CD4-positive, alpha-beta memory T cell (primary cell): ENCODE measurements at regions of chr10 and their contacts with region 1.

Region 1: DNA sequence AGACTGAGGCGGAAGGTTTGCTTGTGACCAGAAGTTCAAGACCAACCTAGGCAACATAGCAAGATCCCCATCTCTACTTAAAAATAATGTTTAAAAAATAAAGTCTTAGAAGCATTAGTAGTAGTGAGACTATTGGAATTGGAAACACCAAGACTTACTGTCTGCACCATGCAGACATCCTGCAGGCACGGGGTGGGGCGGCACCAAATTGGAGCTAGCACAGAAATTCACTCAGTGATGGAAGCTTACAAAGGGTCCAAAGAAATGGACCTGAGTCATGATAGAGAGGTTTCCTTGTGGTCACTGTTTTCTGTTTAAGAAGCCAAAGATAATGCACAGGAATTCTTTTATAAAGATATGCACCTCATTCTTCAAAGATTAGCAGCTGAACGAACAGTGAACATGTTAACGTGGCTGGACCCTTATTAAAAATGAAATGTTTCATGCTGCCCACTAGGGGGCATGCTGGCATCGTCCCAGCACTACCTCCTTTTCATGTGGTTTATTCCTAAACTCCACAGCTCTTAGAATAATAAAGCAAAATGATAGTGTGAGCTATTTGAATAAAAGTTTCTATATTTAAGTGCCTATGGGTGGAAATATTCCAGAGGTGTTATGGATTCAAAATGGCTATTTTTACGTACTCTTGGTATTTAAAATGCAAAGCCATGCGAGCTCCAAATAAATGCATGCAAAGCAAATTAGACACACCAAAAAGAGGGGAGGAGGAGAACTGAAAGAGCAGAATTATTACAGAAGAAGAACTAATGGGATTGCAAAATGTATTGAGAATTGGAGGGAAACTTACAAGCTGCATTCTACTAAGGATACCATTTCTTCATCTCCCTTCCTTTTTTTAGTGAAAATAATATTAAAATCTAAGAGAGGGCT is 28.6 kb downstream of the PDSS1 start:
- DNase-seq: peak in 4 of 5 donors; percentile 48 to 53 (median 50)
- H3K4me3 ChIP-seq: no peak overlapping the region
- H3K4me3 Mint-ChIP-seq: no peak overlapping the region
- H3K27ac ChIP-seq: no peak overlapping the region
- H3K27ac Mint-ChIP-seq: peak overlapping the region in 2 of 7 donors; percentile 2 to 23
- H3K4me1 ChIP-seq: peaks cover 11% of the 10 kb centered on the region
- H3K4me1 Mint-ChIP-seq: peaks cover 8 to 14% (median 11%) of the 10 kb centered on the region in 4 donors
- H3K27me3 ChIP-seq: no peaks in the 10 kb centered on the region
- H3K27me3 Mint-ChIP-seq: no peaks in the 10 kb centered on the region

Region 2: DNA sequence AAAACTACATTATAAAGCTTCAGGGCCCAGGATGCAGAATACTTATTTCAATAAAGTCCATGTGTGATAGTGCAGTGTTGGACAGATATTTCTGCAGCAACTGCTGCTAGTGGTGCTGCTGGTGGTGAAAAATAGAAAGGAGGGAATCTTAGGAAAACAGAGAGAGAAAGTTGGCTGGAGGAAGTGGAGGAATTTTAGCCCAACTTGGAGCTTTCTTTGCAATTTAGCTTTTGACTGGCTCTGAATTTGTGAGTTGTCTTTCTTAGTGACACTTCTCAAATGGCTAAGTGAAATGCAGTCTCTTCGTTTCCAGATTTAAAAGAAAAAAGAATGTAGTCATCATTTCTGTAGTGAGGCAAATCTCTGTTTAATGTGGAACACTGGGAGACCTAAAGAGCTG is 1505.9 kb before region 1 on chr10:
- CTCF ChIA-PET with region 1: no interaction called
- POLR2A ChIA-PET with region 1: no interaction called
- intact Hi-C with region 1: no loop called
- DNase-seq: no peak
- H3K4me3 ChIP-seq: no peak overlapping the region
- H3K4me3 Mint-ChIP-seq: no peak overlapping the region
- H3K27ac ChIP-seq: no peak overlapping the region
- H3K27ac Mint-ChIP-seq: no peak overlapping the region
- H3K4me1 ChIP-seq: no peaks in the 10 kb centered on the region
- H3K4me1 Mint-ChIP-seq: no peaks in the 10 kb centered on the region
- H3K27me3 ChIP-seq: no peaks in the 10 kb centered on the region
- H3K27me3 Mint-ChIP-seq: peaks cover 0 to 2% of the 10 kb centered on the region in 2 donors

Region 3: GRCh38 chr10:26524161-26524831 is 201.8 kb before region 1 on chr10:
- CTCF ChIA-PET with region 1: no interaction called
- POLR2A ChIA-PET with region 1: no interaction called
- intact Hi-C with region 1: no loop called
- DNase-seq: no peak
- H3K4me3 ChIP-seq: no peak overlapping the region
- H3K4me3 Mint-ChIP-seq: no peak overlapping the region
- H3K27ac ChIP-seq: no peak overlapping the region
- H3K27ac Mint-ChIP-seq: peak overlapping the region in 5 of 7 donors; percentile 29 to 70 (median 64)
- H3K4me1 ChIP-seq: no peaks in the 10 kb centered on the region
- H3K4me1 Mint-ChIP-seq: peaks cover 2 to 23% (median 13%) of the 10 kb centered on the region in 4 donors
- H3K27me3 ChIP-seq: no peaks in the 10 kb centered on the region
- H3K27me3 Mint-ChIP-seq: no peaks in the 10 kb centered on the region

Region 4: GRCh38 chr10:26682931-26683330 is 43.2 kb before region 1 on chr10:
- CTCF ChIA-PET with region 1: interaction called, 19 read pairs
- POLR2A ChIA-PET with region 1: no interaction called
- intact Hi-C with region 1: loop called (anchors 5 kb)
- DNase-seq: peak in 4 of 5 donors; percentile 47 to 67 (median 58)
- H3K4me3 ChIP-seq: no peak overlapping the region
- H3K4me3 Mint-ChIP-seq: peak overlapping the region in 6 of 8 donors; percentile 7 to 77 (median 40)
- H3K27ac ChIP-seq: no peak overlapping the region
- H3K27ac Mint-ChIP-seq: peak overlapping the region; percentile 32 to 96 (median 88)
- H3K4me1 ChIP-seq: peaks cover 15% of the 10 kb centered on the region
- H3K4me1 Mint-ChIP-seq: peaks cover 14 to 24% (median 19%) of the 10 kb centered on the region in 4 donors
- H3K27me3 ChIP-seq: no peaks in the 10 kb centered on the region
- H3K27me3 Mint-ChIP-seq: peaks cover 1 to 2% of the 10 kb centered on the region in 2 donors

Region 5: DNA sequence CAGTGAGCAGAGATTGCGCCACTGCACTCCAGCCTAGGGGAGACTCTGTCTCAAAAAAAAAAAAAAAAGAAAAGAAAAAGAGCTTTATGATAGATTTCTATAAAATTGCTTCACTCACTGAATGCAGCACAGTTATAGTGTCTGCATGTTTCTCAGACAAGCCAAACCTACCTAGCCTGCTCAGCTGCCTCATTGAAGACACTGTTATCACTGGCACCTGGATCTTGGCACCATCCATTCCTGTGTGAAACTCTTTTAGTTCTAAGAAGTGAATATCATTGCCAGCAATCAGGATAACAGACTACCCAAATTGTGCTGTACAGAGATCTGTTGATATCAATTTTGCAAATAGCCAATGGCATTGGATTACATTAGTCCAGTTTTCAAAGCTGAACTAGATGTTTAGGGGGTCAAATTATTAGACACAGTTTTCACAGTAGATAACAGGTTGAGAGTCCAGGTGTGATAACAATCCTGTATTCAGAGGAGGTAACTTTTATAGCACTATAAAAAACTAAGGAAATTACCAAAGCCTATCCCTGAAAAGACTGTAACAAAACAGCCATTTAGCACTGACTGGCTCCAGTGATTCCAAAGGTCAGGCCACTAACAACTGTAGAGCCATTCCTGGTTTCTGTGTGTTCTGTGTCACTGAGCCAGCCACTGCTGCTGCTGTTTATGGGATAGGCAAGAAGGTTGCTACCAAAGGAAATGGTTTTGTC is 11.5 kb before region 1 on chr10:
- CTCF ChIA-PET with region 1: interaction called, 26 read pairs
- POLR2A ChIA-PET with region 1: interaction called, 3 read pairs
- intact Hi-C with region 1: no loop called
- DNase-seq: no peak
- H3K4me3 ChIP-seq: no peak overlapping the region
- H3K4me3 Mint-ChIP-seq: no peak overlapping the region
- H3K27ac ChIP-seq: no peak overlapping the region
- H3K27ac Mint-ChIP-seq: peak overlapping the region in 2 of 7 donors; percentile 16 to 36
- H3K4me1 ChIP-seq: no peaks in the 10 kb centered on the region
- H3K4me1 Mint-ChIP-seq: no peaks in the 10 kb centered on the region
- H3K27me3 ChIP-seq: no peaks in the 10 kb centered on the region
- H3K27me3 Mint-ChIP-seq: no peaks in the 10 kb centered on the region

Region 6: DNA sequence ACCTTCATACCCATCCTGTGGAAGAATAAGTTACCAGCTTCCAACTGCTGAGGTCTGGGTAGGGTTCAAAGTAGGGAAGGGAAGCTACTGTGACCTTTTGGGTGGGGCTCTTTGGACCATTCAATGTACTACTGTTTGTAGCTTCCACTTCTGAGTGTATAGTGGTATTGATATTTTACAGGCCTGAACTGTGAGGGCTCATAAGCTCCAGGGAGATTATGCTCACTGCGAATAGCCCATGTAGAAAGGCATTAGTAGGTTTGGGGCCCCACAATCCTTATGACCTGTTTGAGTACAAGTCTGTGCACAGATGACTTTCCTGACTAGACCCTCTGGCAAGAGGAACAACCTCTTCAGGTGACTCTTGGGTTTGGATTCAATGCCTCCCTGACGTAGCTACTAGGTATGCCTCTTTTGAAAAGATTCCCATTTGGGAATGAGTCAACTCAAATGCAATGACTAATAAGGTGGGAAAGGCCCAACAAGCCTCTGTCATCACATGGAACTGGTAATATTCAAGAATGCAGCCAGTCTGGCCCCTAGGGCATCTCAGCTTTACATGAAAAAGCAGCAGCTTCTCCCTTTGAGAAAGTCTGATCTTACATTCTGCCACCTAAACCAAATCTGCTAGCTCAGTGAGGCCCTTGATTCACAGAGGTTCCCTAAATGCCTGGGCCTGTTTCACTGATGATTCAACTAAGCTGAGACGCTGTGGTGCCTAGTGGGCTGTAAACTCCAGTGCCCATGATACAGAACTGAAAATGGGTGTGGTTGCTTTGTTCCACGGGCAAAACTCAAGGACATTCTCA is 54.9 kb after region 1 on chr10:
- CTCF ChIA-PET with region 1: interaction called, 15 read pairs
- POLR2A ChIA-PET with region 1: no interaction called
- intact Hi-C with region 1: no loop called
- DNase-seq: no peak
- H3K4me3 ChIP-seq: no peak overlapping the region
- H3K4me3 Mint-ChIP-seq: peak overlapping the region in 4 of 8 donors; percentile 3 to 68 (median 12)
- H3K27ac ChIP-seq: no peak overlapping the region
- H3K27ac Mint-ChIP-seq: peak overlapping the region in 3 of 7 donors; percentile 7 to 69 (median 19)
- H3K4me1 ChIP-seq: peaks cover 78% of the 10 kb centered on the region
- H3K4me1 Mint-ChIP-seq: peaks cover 71 to 96% (median 87%) of the 10 kb centered on the region in 4 donors
- H3K27me3 ChIP-seq: no peaks in the 10 kb centered on the region
- H3K27me3 Mint-ChIP-seq: no peaks in the 10 kb centered on the region

Region 7: DNA sequence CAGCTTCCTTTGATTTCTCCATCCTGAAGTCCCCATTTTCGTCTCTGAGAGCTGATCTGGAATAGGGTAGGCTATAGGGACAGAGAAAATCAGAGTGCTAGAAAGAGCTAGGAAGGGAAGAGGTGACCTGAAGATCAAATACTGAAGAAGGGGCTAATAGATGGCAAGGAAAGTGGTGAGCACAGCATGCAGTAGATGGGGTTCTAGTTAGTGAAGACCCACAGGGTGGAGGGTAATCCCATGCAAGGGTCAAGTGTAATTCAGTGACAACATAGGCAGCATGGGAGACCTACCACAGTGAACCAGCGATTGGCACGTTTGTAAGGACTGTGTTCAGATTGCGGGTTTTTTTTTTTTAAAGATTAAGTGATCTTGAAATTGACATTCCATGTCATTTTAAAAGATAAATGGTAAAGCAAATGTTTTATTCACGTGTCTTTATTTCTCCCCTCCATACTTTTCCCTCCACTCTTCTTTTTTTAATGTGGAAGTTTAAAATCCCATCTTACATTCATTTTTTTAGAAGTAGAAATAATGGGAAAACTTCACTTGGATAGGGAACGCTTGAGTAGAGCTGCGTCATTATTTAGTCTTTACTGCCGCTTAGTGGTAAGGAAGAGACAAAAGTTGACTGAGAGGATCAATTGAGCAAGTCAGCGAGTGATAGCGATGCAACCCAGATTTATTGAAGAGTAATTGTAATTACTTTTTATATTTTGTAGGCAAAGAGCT is 155.7 kb after region 1 on chr10:
- CTCF ChIA-PET with region 1: interaction called, 249 read pairs
- POLR2A ChIA-PET with region 1: interaction called, 13 read pairs
- intact Hi-C with region 1: loop called (anchors 1 kb)
- DNase-seq: peak in 4 of 5 donors; percentile 34 to 56 (median 43)
- H3K4me3 ChIP-seq: no peak overlapping the region
- H3K4me3 Mint-ChIP-seq: no peak overlapping the region
- H3K27ac ChIP-seq: no peak overlapping the region
- H3K27ac Mint-ChIP-seq: no peak overlapping the region
- H3K4me1 ChIP-seq: no peaks in the 10 kb centered on the region
- H3K4me1 Mint-ChIP-seq: peaks cover 0 to 5% (median 1%) of the 10 kb centered on the region in 4 donors
- H3K27me3 ChIP-seq: no peaks in the 10 kb centered on the region
- H3K27me3 Mint-ChIP-seq: peaks cover 7 to 9% of the 10 kb centered on the region in 2 donors